ENCODE measurements at regions of chr10 and their contacts with region 1.

Region 1: DNA sequence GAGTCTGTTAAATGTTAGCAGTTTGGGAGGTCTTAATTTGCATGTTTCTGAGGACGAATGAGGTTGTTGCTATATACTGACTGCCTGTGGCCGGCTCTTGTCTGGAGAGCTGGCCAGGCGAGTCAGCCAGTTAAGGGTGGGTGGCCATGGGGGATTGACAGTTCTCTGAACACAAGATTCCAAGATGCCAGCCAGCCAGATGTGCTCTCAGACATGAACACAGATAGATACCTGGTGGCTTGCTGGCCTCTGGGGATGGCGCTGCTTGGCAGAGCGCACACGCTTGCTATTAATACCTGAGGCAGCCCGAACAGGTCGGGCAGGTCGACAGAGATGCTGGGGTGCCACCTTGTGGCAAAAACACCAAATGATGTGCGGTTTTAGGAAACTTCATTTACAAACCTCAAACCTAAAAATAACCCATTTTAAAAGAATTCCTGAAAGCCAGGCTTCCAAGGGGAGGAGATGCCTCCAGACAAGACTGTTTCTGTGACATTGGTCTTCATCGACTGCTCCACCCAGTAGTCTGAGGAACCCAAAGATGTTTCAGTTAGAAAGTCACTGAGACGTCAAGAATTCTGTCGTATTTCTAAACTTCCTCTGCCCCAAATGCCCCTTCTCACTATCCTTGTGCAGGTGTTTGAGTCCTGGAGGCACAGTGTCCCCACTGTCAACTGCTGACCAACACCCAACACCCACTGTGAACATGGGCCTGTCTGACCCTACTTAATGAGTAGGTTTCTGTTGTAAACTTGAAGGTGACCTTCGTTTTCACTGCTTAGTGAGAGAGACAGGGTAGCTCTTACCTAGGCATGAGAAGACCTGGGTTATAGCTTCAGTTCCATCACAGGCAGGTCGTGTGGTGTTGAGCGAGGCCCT is 123.4 kb downstream of the NT5C2 start:
- DNase-seq: peak; percentile 59
- H3K4me3 Mint-ChIP-seq: no peak overlapping the region
- H3K27ac Mint-ChIP-seq: no peak overlapping the region
- H3K4me1 Mint-ChIP-seq: no peaks in the 10 kb centered on the region
- H3K27me3 Mint-ChIP-seq: no peaks in the 10 kb centered on the region
- CTCF ChIP-seq: peak; percentile 72

Region 2: GRCh38 chr10:102729029-102730026 is 340.4 kb before region 1 on chr10:
- CTCF ChIA-PET with region 1: interaction called, 3 read pairs
- POLR2A ChIA-PET with region 1: no interaction called
- intact Hi-C with region 1: loop called (anchors 2 kb)
- DNase-seq: peak; percentile 75
- H3K4me3 Mint-ChIP-seq: no peak overlapping the region
- H3K27ac Mint-ChIP-seq: no peak overlapping the region
- H3K4me1 Mint-ChIP-seq: peaks cover 6% of the 10 kb centered on the region
- H3K27me3 Mint-ChIP-seq: no peaks in the 10 kb centered on the region
- CTCF ChIP-seq: peak; percentile 81

Region 3: DNA sequence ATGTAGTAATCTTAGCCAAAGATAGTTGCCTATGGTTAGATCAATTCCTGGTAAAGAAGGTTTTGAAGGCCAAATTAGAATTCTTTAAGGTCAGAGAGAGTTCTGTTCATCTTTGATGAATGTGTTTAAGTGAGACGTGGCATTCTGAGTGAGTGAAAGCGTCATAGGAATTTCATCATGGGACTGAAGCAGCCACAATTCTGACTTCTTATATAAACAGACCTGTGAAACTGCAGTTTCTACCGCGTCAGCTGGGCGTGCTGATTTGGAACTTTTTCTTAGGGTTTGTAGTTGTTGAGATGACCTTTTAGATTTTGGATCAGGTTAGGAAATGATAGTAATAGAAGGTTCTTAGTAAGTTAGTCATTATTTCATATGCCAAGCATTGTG is 47.8 kb before region 1 on chr10:
- CTCF ChIA-PET with region 1: no interaction called
- POLR2A ChIA-PET with region 1: no interaction called
- intact Hi-C with region 1: no loop called
- DNase-seq: no peak
- H3K4me3 Mint-ChIP-seq: no peak overlapping the region
- H3K27ac Mint-ChIP-seq: no peak overlapping the region
- H3K4me1 Mint-ChIP-seq: no peaks in the 10 kb centered on the region
- H3K27me3 Mint-ChIP-seq: no peaks in the 10 kb centered on the region
- CTCF ChIP-seq: no peak

Region 4: GRCh38 chr10:103168486-103169311 is 99.0 kb after region 1 on chr10:
- CTCF ChIA-PET with region 1: no interaction called
- POLR2A ChIA-PET with region 1: no interaction called
- intact Hi-C with region 1: no loop called
- DNase-seq: peak; percentile 50
- H3K4me3 Mint-ChIP-seq: no peak overlapping the region
- H3K27ac Mint-ChIP-seq: peak overlapping the region; percentile 81
- H3K4me1 Mint-ChIP-seq: no peaks in the 10 kb centered on the region
- H3K27me3 Mint-ChIP-seq: no peaks in the 10 kb centered on the region
- CTCF ChIP-seq: no peak

Region 5: DNA sequence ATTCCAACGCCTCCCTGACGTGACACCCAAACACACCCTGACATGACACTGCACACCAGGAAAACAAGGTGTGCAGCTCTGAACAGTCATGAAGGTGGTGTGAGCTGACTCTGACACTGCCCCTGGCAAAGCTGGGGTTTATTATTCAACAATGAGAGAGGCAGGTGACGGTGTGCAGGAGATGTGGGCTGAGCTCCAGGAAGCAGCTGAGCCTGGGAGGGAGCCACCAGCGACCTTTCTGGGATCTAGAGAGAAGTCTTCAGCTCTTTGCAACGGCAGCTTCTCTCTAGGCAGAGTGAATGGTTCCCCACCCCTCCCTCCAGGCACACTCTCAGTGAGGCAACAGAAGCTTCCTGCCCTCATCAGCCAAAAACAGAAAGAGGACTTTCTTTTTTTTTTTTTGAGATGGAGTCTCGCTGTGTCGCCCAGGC is 720.1 kb after region 1 on chr10:
- CTCF ChIA-PET with region 1: no interaction called
- POLR2A ChIA-PET with region 1: no interaction called
- intact Hi-C with region 1: no loop called
- DNase-seq: peak; percentile 58
- H3K4me3 Mint-ChIP-seq: peak overlapping the region; percentile 1
- H3K27ac Mint-ChIP-seq: peak overlapping the region; percentile 10
- H3K4me1 Mint-ChIP-seq: peaks cover 18% of the 10 kb centered on the region
- H3K27me3 Mint-ChIP-seq: no peaks in the 10 kb centered on the region
- CTCF ChIP-seq: no peak

Measured in MCF 10A (cell line).